Dendritic cell treated with granulocyte-macrophage colony-stimulating factor and Interleukin-4, amounts not matched to agents 40 ng/mL and 50 ng/mL, for 4 days (primary cell): ENCODE measurements at regions of chr14 and their contacts with region 1.

Region 1: DNA sequence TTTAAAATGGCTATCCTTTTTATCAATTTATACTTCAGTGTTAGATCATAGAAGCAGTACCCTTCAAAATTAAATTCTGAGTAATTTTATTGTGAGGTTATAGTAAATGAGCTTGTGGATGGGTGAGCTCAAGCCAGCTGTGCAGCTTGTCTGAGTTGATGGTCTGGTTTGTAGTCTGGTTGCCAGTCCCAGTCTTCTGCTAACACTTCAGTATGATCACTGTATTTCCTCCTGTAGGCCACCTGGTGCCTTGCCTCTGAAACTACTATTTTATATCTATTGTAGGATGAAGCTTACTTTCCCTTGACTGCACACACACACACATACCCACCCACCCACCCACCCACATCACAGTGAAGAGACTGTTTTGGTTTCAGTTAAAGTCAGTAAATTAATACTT is 496.4 kb downstream of the PCNX1 start:
- H3K4me3 Mint-ChIP-seq: no peak overlapping the region
- H3K27ac Mint-ChIP-seq: no peak overlapping the region
- H3K4me1 Mint-ChIP-seq: peaks cover 24% of the 10 kb centered on the region
- H3K27me3 Mint-ChIP-seq: no peaks in the 10 kb centered on the region

Region 2: GRCh38 chr14:71138448-71139293 is 265.0 kb before region 1 on chr14:
- intact Hi-C with region 1: loop called (anchors 1 kb)
- H3K4me3 Mint-ChIP-seq: no peak overlapping the region
- H3K27ac Mint-ChIP-seq: peak overlapping the region; percentile 0
- H3K4me1 Mint-ChIP-seq: peaks cover 35% of the 10 kb centered on the region
- H3K27me3 Mint-ChIP-seq: no peaks in the 10 kb centered on the region

Region 3: DNA sequence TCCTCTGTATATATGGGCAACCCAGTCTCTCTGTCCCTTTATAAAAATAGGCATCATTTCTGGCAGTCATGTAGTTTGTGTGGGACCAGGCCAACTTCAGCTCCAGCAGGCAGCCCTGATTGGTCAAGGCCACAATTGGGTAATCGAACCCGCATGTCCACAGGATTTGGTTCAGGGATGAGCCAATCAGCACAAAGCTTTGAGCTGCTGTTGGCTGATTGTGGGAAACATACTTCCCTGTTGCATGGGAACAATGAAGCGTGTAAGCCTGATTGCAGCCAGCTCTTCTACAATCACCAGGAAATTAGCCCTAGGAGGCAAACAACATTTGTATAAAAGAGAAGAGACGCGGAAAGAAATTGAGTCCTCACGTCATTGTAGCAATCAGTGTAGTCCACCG is 167.8 kb before region 1 on chr14:
- intact Hi-C with region 1: no loop called
- H3K4me3 Mint-ChIP-seq: no peak overlapping the region
- H3K27ac Mint-ChIP-seq: no peak overlapping the region
- H3K4me1 Mint-ChIP-seq: peaks cover 26% of the 10 kb centered on the region
- H3K27me3 Mint-ChIP-seq: no peaks in the 10 kb centered on the region

Region 4: DNA sequence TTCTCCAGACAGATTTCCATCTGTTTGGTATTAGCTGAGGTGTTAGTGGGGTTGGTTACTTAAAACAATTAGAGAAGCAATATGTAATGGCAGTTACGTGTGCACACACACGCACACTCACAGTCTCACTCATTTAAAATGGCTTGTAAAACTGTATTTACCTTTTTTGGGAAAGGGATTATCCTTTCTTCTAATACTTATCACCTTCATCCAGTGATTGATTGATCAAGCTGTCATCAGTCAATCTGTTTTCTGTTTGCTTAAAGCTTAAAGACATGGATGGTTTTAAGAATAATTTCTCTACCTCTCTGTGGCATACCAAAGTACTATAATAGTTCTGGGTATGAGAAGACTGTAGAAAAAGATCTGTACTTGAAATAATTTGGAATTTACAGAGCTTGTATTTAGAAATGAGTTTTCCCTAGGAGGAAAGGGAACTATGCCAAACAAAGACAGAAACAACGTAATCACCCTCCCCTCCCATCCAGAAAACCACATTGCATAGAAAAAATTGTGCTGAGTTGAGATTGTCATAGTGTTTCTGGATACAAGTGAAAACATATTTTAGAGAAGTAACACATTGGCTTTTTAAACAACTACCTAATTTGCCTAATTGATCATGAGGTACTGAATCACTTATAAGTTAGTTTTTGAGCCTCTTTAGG is 40.6 kb before region 1 on chr14:
- intact Hi-C with region 1: loop called (anchors 1 kb)
- H3K4me3 Mint-ChIP-seq: no peak overlapping the region
- H3K27ac Mint-ChIP-seq: peak overlapping the region; percentile 86
- H3K4me1 Mint-ChIP-seq: peaks cover 52% of the 10 kb centered on the region
- H3K27me3 Mint-ChIP-seq: no peaks in the 10 kb centered on the region